ENCODE measurements at regions of chr4 and their contacts with region 1.

Region 1: DNA sequence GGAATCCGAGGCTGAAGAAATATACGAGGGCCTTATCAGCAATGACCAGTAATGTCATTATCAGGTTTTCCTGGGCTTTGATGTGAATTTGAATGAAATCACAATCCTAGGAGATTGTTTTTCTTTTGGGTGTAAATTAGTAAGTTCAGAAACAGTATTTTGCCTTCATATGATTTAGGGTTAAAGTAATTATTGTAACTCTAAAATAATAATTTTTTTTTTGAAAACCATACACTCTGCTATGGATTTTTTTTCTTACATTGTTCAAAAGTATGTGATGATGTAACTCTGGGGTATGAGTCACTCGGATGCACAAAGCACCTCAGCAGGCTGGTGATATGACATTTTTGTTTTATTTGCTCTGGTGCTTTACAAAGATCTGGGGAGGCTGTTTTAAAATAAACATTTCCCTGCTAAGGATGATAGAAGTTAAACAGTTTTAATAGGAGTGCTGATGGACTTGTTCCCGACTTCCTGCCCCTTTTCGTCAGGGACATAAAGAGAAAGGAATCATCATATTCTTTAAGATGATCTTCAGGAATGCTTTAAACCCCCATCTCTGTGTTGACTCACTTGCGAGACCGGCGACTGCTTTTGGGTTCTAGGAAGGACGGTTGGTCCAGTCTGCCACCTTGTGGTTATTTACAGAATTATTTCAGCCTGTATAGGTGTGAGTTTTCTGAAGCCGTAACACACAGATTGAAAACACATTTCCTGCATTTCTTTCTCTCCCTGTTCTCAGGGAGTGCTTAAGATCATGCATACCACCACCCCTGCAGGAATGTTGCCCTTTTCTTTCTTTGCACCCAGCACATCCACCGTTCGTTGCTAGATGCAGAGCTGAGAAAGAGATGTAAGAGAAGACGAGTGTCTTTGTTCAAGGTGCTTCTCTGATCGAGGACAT is 72.5 kb downstream of the RAPGEF2 start:
- DNase-seq: peak; percentile 36 to 67 (median 45)
- H3K4me3 ChIP-seq: no peak overlapping the region
- H3K27ac ChIP-seq: no peak overlapping the region
- H3K4me1 ChIP-seq: peaks cover 9% of the 10 kb centered on the region
- H3K27me3 ChIP-seq: no peaks in the 10 kb centered on the region
- CTCF ChIP-seq: peak; percentile 41 to 73 (median 63)
- EP300 ChIP-seq: no peak
- POLR2A ChIP-seq: no peak

Region 2: DNA sequence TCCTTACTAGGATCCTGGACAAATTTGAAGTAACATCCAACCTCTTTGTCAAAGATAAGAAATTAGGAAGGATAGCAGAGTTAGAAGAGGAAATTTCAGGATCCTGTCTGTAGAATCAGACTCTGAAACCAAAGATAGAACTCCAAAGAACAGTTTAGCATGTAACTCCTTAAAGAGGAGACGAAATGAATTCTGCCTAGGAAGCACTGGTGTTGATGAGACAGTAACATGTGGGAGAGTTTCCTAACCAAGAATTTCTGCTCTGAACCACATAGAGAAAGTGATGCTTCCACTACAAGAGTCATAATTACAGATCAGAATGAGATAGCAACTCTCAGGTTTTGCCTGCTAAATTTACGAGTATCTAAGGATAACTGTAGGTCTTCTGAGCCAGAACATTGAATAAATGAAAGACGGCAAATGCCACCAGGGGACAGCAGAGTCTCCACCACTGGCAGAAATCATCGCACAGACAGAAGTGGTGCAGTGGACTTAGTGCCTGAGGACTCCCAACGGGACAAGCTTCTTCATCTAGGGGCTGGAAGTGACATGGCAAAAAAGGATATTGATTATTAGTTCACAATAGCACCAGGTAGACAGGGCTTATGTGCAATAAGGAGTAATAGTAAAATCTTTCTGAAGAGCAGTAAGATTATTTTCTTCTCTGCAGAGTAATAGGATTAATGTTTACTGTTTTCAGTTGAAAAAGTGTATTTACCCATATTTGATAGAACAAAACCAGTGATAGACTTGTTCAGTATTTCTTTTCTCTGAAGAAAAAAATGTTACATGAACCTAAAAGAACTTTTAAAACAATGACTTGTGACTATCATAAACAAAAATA is 445.4 kb before region 1 on chr4:
- intact Hi-C with region 1: loop called in 2 of 4 experiments (anchors 10 kb)
- DNase-seq: peak; percentile 37 to 63 (median 52)
- H3K4me3 ChIP-seq: no peak overlapping the region
- H3K27ac ChIP-seq: no peak overlapping the region
- H3K4me1 ChIP-seq: no peaks in the 10 kb centered on the region
- H3K27me3 ChIP-seq: no peaks in the 10 kb centered on the region
- CTCF ChIP-seq: peak; percentile 61 to 83 (median 77)
- EP300 ChIP-seq: no peak
- POLR2A ChIP-seq: no peak

Region 3: DNA sequence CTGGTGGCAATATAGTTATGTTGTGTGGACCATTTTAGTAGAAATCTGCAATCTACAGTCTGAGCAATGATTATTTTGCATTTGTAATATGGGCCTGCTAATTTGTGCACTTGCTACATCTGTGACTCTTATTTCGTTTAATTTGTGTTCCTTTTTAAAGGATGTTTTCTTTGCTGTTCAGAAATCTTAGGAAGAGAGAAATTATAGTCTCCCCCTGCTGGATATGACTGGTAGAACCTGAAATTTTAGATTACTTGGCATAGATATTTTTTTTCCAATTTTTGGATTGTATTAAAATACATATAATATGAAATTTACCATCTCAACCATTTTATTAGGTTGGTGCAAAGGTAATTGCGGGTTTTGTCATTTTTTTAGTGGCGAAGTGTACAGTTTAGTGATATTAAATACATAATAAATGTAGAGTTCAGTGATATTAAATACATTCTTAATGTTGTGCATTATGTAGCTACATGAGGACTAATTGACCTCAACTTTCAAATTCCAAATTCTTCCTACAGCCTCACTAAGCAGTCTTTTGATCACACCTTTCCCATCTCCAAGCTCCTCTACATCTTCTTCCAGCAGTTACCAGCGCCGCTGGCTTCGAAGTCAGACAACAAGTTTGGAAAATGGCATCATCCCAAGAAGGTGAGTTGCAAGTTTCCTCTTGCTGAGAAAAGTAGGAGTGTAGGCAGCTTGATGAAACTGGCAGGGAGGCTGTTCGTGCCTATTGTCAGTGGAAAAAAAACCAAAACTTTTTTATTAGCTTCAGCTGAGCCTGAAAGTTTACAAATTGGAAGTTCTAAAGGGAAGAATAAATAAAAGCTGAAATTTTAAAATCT is 324.3 kb before region 1 on chr4:
- intact Hi-C with region 1: loop called in 3 of 4 experiments (anchors 5 to 10 kb)
- DNase-seq: no peak
- H3K4me3 ChIP-seq: no peak overlapping the region
- H3K27ac ChIP-seq: no peak overlapping the region
- H3K4me1 ChIP-seq: no peaks in the 10 kb centered on the region
- H3K27me3 ChIP-seq: no peaks in the 10 kb centered on the region
- CTCF ChIP-seq: peak in 2 of 3 donors; percentile 26 to 63
- EP300 ChIP-seq: no peak
- POLR2A ChIP-seq: no peak

Region 4: DNA sequence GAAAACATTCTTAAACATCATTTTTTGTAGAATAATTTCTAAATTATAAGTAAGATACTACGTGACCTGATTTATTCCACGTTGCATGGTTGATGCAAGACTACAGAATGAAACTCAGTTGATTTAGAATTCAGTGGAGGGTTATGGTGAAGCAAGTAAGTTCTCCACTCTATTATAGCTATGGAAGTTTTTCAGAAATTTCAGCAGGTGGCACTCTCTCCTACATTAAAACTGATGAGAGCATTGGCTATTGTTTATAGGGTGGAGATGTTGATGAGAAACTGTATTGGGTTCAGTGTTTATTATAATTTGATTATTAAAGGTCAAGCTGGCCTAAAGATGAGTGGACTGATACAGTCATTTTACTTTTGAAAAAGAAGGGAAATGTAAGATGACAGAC is 318.5 kb before region 1 on chr4:
- intact Hi-C with region 1: loop called (anchors 5 to 10 kb)
- DNase-seq: no peak
- H3K4me3 ChIP-seq: no peak overlapping the region
- H3K27ac ChIP-seq: no peak overlapping the region
- H3K4me1 ChIP-seq: no peaks in the 10 kb centered on the region
- H3K27me3 ChIP-seq: no peaks in the 10 kb centered on the region
- CTCF ChIP-seq: peak; percentile 20 to 50 (median 35)
- EP300 ChIP-seq: no peak
- POLR2A ChIP-seq: no peak

Region 5: GRCh38 chr4:159102622-159103383 is 72.5 kb before region 1 on chr4 and contains the start of gene RAPGEF2:
- intact Hi-C with region 1: loop called in 1 of 4 experiments (anchors 10 kb)
- DNase-seq: peak; percentile 92 to 94 (median 92)
- H3K4me3 ChIP-seq: peak within 1 kb of the TSS; percentile 72
- H3K27ac ChIP-seq: peak within 1 kb of the TSS; percentile 91
- H3K4me1 ChIP-seq: peaks cover 9% of the 10 kb centered on the region
- H3K27me3 ChIP-seq: no peaks in the 10 kb centered on the region
- CTCF ChIP-seq: no peak
- EP300 ChIP-seq: no peak
- POLR2A ChIP-seq: peak; percentile 92
- total RNA-seq, gene RAPGEF2: 22.4 to 46.5 (median 25.4) TPM

Region 6: DNA sequence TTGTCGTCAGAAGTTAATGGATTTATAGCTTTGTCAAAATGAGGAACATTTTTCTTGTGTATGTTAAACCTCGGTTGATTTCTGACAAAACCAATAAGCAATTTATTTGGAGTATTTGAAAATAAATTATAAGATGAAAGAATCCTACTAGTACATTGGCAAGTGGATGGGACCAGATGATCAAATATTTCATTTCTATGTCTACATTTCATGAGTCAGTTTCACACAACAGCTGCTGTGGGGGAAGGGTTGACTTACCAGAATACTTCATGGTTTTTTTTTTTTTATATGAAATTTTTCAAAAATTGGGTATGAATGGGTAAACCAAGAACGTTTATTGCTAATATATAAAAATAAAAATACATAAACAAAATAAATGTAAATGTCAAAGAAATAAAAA is 33.1 kb before region 1 on chr4:
- intact Hi-C with region 1: no loop called
- DNase-seq: no peak
- H3K4me3 ChIP-seq: no peak overlapping the region
- H3K27ac ChIP-seq: no peak overlapping the region
- H3K4me1 ChIP-seq: peaks cover 6% of the 10 kb centered on the region
- H3K27me3 ChIP-seq: no peaks in the 10 kb centered on the region
- CTCF ChIP-seq: no peak
- EP300 ChIP-seq: no peak
- POLR2A ChIP-seq: no peak

Region 7: DNA sequence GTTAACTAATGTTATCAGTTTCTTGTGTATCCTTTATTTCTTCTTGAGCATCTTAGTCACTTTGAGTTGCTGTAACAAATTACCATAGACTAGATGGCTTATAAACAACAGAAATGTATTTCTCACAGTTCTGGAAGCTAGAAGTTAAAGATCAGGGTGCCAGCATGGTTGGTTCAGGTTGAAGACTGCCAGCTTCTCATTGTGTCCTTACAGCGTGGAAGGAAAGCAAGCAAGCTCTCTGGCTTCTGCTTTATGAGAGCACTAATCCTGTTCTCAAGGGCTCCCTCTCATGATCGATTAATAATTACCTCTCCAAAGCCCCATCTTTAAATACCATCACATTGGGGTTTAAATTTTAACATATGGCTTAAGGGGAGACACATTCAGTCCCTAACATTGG is 424.7 kb after region 1 on chr4:
- intact Hi-C with region 1: no loop called
- DNase-seq: no peak
- H3K4me3 ChIP-seq: no peak overlapping the region
- H3K27ac ChIP-seq: no peak overlapping the region
- H3K4me1 ChIP-seq: no peaks in the 10 kb centered on the region
- H3K27me3 ChIP-seq: no peaks in the 10 kb centered on the region
- CTCF ChIP-seq: no peak
- EP300 ChIP-seq: no peak
- POLR2A ChIP-seq: no peak

Measured in ovary (tissue), 10 donors.